GM12878 (cell line): ENCODE measurements at regions of chr1 and their contacts with region 1.

Region 1: DNA sequence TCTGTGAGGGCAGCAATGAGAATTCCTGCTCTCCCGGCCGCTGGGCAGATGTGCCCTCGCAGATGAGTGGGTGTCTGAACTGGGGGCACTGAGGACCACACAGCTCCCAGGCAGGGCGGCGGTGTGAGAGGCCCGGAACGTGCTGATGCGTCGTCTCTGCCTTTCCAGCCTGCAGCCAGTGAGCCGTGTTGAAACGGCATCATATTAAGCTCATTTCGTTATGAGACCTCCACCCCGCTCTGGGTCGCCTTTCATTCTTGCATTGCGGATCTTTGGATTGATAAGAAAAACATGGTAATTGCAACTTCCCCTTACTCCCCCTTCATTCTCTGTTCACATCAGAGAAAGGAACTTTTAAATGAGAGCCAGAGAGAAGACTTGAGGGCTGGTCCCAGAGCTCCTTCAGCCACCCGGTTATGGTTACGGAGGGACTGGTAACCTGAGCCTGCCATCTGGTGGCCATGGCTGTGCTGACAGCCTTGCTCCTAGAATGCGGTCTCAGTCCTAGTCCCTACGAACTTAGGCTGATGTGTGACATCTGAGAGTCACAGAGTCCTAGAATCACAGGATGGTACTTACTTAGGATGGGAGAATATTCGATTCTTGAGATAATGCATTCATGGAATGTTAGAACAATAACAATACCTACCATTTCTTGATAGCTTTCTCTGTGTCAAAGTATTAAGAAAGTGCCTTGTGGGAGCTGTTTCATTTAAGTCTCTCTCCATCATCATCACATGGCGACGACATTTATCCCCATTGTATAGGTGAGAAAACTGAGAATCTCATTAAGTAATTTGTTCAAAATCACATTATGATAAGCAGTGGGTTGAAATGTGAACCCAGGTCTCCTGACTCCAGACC is 271.0 kb downstream of the TRABD2B start:
- DNase-seq: peak; percentile 7
- ATAC-seq: peak; percentile 98
- H3K4me3 ChIP-seq: no peak overlapping the region
- H3K27ac ChIP-seq: no peak overlapping the region
- H3K4me1 ChIP-seq: no peaks in the 10 kb centered on the region
- H3K27me3 ChIP-seq: peaks cover 5 to 6% of the 10 kb centered on the region in 2 experiments
- CTCF ChIP-seq: peak; percentile 87 to 93 (median 91)
- EP300 ChIP-seq: no peak
- POLR2A ChIP-seq: no peak
- RAD21 ChIP-seq: peak; percentile 68

Region 2: GRCh38 chr1:47192458-47193384 is 533.5 kb before region 1 on chr1:
- CTCF ChIA-PET with region 1: interaction called, 5 read pairs
- POLR2A ChIA-PET with region 1: no interaction called
- RAD21 ChIA-PET with region 1: no interaction called
- SMC1A ChIA-PET with region 1: no interaction called
- in situ Hi-C with region 1: loop called (anchors 5 kb)
- intact Hi-C with region 1: no loop called
- DNase-seq: no peak
- ATAC-seq: peak; percentile 94
- H3K4me3 ChIP-seq: no peak overlapping the region
- H3K27ac ChIP-seq: no peak overlapping the region
- H3K4me1 ChIP-seq: no peaks in the 10 kb centered on the region
- H3K27me3 ChIP-seq: peaks cover 0 to 5% of the 10 kb centered on the region in 2 experiments; a peak in 1 of 4 replicates
- CTCF ChIP-seq: peak; percentile 86 to 96 (median 95)
- EP300 ChIP-seq: no peak
- POLR2A ChIP-seq: no peak
- RAD21 ChIP-seq: peak; percentile 80

Region 3: GRCh38 chr1:47418681-47419325 is 307.4 kb before region 1 on chr1:
- CTCF ChIA-PET with region 1: interaction called, 11 read pairs
- POLR2A ChIA-PET with region 1: no interaction called
- RAD21 ChIA-PET with region 1: no interaction called
- SMC1A ChIA-PET with region 1: interaction called, 5 read pairs
- in situ Hi-C with region 1: no loop called
- intact Hi-C with region 1: no loop called
- DNase-seq: no peak
- ATAC-seq: no peak
- H3K4me3 ChIP-seq: no peak overlapping the region
- H3K27ac ChIP-seq: no peak overlapping the region
- H3K4me1 ChIP-seq: no peaks in the 10 kb centered on the region
- H3K27me3 ChIP-seq: peaks cover 5 to 8% of the 10 kb centered on the region in 2 experiments; a peak in 3 of 4 replicates
- CTCF ChIP-seq: no peak
- EP300 ChIP-seq: no peak
- POLR2A ChIP-seq: no peak
- RAD21 ChIP-seq: no peak

Region 4: DNA sequence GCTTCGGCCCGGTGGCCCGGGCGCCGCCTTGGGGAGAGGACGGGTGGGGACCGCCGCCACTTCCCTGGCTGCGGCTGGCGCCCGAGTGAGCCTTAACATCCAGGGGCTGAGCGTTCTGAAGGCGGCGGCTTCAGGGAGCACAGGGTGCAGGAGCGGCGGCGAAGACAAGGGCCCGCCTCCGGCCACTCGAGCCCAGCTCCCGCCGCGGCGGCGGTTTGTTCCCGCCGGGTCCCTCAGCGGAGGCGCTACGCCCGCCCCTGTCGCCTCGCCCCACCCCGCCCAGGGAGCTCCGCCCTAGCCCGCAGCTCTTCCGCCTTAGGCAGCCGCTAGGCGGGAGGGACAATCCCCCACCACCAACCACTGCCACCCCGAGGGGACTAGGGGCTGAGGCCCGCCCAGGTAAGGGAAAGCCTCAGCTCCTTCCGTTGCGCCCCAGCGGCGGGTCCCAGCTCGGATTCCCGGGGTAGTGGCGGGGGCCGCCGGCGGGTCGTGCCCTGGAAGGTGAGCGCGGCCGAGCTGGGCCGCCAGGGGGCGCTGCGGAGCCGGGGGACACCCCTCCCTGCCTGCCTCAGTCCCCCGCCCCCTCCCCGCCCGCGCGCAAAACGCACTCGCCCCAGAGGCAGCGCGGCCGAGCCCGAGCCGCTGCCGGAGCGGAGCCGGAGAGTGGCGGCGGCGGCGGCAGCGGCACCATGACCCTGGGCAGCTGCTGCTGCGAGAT is 288.6 kb before region 1 on chr1 and contains the start of gene FOXD2:
- CTCF ChIA-PET with region 1: interaction called, 22 read pairs
- POLR2A ChIA-PET with region 1: no interaction called
- RAD21 ChIA-PET with region 1: interaction called, 23 read pairs
- SMC1A ChIA-PET with region 1: interaction called, 12 read pairs
- in situ Hi-C with region 1: no loop called
- intact Hi-C with region 1: loop called (anchors 5 kb)
- DNase-seq: peak; percentile 59
- ATAC-seq: peak; percentile 84
- H3K4me3 ChIP-seq: peak within 1 kb of the TSS; percentile 88
- H3K27ac ChIP-seq: peak within 1 kb of the TSS; percentile 64
- H3K4me1 ChIP-seq: peaks cover 8% of the 10 kb centered on the region
- H3K27me3 ChIP-seq: peaks cover 12 to 14% of the 10 kb centered on the region in 2 experiments
- CTCF ChIP-seq: peak; percentile 70 to 81 (median 75)
- EP300 ChIP-seq: no peak
- POLR2A ChIP-seq: peak; percentile 70
- RAD21 ChIP-seq: peak; percentile 21; the same call in 1 of the 2 replicates
- polyA plus RNA-seq, gene FOXD2: 0.04 TPM in 1 of 2 experiments, not detected in the other

Region 5: DNA sequence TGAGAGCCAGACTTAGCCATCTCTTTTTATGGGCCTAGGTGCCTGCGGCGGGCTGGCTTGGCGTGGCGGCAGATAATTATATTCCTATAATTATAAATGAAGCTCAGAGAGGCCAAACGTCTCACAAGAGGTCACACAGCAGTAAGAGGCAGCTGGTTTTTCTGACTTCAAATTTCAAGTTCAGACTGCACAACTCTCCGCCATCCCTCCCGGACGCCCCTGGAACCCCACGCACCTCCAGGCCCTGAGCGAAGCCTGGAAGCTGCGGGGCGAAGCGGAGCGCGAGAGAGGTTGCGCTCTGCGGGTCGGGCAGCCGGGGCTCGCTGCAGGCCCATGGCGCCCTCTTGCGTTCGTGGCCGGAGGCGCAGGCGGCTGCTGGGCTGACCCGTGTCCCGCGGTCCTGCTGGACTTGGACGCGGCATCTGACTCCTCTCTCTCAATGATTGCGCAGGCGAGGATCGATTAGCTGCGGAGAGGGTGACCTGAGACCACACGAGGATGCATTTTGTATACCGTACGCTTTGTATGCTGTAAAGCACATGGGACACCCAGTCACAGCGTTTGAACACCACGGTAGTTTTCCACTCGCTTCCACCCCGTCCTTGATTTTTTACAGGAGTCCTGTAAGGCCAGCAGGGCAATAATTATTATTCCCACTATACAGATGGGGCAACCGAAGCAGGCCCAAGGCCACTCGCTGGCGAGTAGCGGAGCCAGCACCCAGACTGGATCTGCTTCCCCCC is 15.7 kb before region 1 on chr1:
- CTCF ChIA-PET with region 1: interaction called, 11 read pairs
- POLR2A ChIA-PET with region 1: interaction called, 4 read pairs
- RAD21 ChIA-PET with region 1: interaction called, 4 read pairs
- SMC1A ChIA-PET with region 1: interaction called, 15 read pairs
- in situ Hi-C with region 1: no loop called
- intact Hi-C with region 1: no loop called
- DNase-seq: no peak
- ATAC-seq: peak; percentile 95
- H3K4me3 ChIP-seq: no peak overlapping the region
- H3K27ac ChIP-seq: no peak overlapping the region
- H3K4me1 ChIP-seq: no peaks in the 10 kb centered on the region
- H3K27me3 ChIP-seq: peaks cover 13 to 18% of the 10 kb centered on the region in 2 experiments
- CTCF ChIP-seq: peak; percentile 93 to 96 (median 93)
- EP300 ChIP-seq: no peak
- POLR2A ChIP-seq: no peak
- RAD21 ChIP-seq: peak; percentile 87